ENCODE measurements at regions of chr1 and their contacts with region 1.

Region 1: DNA sequence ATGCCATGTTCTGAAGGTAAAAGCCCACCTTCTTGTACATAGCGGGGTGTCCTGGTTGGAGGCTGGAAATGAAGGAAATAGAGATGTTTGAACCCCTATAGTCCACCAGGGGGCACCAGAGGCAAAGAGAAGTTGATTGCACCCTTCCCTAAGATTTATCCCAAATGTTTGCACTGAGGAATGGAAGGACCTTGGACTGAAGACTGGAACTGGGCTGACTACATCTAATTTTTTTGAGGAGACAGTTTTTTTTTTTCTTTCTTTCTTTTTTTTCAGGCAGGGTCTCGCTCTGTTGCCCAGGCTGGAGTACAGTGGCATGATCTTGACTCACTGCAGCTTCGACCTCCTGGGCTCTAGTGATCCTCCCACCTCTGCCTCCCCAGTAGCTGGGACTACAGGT is 55.3 kb upstream of the EIF4G3 start:
- DNase-seq: peak; percentile 70
- H3K4me3 ChIP-seq: no peak overlapping the region
- H3K27ac ChIP-seq: no peak overlapping the region
- H3K4me1 ChIP-seq: no peaks in the 10 kb centered on the region
- H3K27me3 ChIP-seq: no peaks in the 10 kb centered on the region
- CTCF ChIP-seq: peak; percentile 76 to 90 (median 81)
- POLR2A ChIP-seq: no peak

Region 2: DNA sequence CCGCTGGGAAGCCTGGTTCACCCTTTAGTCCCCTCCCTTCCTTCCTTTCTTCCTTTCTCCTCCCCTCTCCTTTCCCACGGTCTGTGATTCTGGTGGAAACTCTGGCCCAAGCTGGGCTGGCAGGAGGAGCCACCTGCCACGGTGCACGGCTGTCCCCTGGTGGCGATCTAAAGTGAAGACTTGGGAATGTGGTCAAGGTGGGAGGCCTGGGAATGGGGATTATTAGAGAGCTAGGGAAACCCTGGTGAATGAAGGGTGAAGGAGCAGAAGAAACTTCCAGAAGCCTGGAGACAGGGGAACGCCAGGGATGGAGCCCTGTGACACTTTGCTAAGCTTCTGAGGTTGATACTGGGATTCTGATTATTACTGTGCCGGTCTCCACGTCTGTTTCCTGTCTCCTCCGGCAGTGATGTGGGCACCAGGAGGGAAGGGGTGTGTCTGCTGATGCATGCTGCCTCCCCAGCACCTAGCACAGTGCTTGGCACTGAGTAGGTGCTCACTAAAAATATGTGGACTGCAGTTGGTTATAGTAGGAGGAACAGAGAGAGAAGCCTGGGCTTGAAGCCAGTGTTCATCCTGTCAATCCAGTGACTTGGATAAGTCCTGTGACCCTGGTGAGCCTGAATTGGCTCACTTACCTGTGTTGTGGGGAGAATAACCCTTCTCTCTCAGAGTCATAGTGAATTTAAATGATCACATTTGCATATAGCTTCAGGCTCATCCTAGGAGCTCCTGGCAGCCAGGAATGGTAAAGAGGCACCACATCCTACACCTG is 136.7 kb after region 1 on chr1:
- intact Hi-C with region 1: loop called (anchors 5 kb)
- DNase-seq: peak; percentile 83
- H3K4me3 ChIP-seq: no peak overlapping the region
- H3K27ac ChIP-seq: no peak overlapping the region
- H3K4me1 ChIP-seq: no peaks in the 10 kb centered on the region
- H3K27me3 ChIP-seq: no peaks in the 10 kb centered on the region
- CTCF ChIP-seq: peak; percentile 88 to 98 (median 96)
- POLR2A ChIP-seq: no peak

Measured in testis (tissue), 5 donors.